ENCODE measurements at regions of chr6 and their contacts with region 1.

Region 1: GRCh38 chr6:18206591-18206990 is 51.4 kb downstream of the KDM1B start:
- DNase-seq: no peak
- H3K27ac ChIP-seq: no peak overlapping the region
- CTCF ChIP-seq: no peak

Region 2: DNA sequence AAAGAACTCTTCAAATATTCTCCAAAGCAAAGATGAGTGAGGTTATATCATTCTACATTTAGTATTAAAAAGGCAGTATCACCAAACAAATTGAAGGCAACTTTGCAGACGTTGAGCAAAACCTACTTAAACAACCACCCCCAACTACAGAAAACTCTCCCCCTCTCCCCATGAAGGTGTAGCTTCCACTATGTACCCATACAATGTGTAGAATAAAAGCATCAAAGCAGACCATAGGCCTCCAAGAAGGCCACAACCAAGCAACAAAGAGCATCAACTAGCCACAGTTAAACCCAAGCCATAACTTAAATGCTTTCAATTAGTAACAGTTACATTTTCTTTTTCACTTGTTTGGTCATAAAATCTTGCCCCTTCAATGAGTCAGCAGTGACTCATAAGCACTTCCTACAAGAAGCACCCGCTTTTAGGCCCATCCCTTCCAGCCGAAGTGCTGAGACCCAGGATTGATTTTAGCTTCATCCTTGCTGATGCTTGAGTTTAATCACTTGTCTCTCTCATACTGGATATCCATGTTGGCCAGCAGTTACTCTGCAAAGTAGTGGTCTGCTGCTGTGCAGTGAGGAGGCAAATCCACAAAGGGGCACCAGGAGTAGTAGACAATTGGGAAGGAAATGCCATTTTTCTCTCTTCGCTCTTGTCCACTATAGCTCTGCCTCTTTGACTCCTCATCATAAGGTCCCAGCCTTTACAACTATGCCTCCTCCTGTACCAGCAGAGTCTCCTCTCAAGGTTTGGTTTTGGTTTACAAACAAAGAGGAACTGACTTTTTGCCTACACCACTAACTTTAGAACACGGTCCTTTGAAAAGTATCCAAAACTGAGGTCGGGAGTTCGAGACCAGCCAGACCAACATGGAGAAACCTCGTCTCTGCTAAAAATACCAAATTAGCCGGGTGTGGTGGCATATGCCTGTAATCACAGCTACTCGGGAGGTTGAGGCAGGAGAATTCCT is 491.4 kb before region 1 on chr6:
- CTCF ChIA-PET with region 1: no interaction called
- POLR2A ChIA-PET with region 1: interaction called, 11 read pairs
- DNase-seq: peak; percentile 88
- H3K27ac ChIP-seq: peak overlapping the region; percentile 4; the same call in 1 of the 2 replicates
- CTCF ChIP-seq: no peak

Region 3: DNA sequence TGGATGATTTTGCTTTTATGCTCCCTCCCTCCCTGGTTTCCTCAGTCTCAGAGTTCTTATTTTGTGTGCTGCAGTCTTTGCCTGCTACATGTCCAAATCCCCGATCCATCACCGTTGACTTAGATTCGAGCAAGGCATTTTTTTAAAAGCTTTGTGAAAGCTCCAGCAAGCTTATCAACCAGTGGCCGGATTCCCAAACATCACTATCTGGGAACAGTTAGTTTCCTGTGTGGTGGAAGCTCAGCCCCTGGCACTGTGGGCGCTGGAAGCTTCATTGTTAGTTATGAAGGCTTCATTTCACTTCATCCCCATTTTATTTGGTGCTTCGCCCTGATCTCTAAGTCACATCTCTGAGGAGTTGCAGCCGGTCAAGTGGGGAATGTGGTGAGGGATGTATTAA is 13.0 kb after region 1 on chr6:
- CTCF ChIA-PET with region 1: no interaction called
- POLR2A ChIA-PET with region 1: no interaction called
- DNase-seq: no peak
- H3K27ac ChIP-seq: peak overlapping the region; percentile 33; the same call in 1 of the 2 replicates
- CTCF ChIP-seq: no peak

Measured in RWPE1 (cell line).